AG04450 (cell line): ENCODE measurements at regions of chr4 and their contacts with region 1.

Region 1: GRCh38 chr4:152408514-152409327 is 127.2 kb downstream of the FBXW7 start:
- DNase-seq: no peak
- H3K4me3 ChIP-seq: no peak overlapping the region
- H3K27ac ChIP-seq: no peak overlapping the region
- H3K27me3 ChIP-seq: no peaks in the 10 kb centered on the region
- CTCF ChIP-seq: peak; percentile 68

Region 2: GRCh38 chr4:152385551-152385950 is 23.2 kb before region 1 on chr4:
- CTCF ChIA-PET with region 1: interaction called, 18 read pairs
- POLR2A ChIA-PET with region 1: no interaction called
- DNase-seq: no peak
- H3K4me3 ChIP-seq: no peak overlapping the region
- H3K27ac ChIP-seq: no peak overlapping the region
- H3K27me3 ChIP-seq: no peaks in the 10 kb centered on the region
- CTCF ChIP-seq: peak; percentile 66

Region 3: DNA sequence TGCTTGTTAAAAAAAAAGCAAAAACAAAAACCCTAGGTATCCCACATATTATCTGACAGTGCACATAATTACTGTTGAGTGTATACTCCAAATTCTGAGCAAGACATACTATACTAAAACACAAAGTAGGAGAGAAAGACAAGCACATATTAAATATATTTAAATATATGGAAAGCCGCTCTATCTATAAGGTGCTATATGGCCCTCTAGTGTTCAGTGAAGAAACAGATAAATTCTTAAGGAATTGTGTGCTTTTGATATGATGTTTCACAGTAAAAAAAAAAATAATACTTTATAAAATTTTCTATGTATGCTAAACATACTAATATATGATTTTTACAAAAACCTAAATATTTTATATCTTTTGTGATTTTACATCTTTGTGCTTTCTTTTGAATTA is 10.7 kb before region 1 on chr4:
- CTCF ChIA-PET with region 1: interaction called, 23 read pairs
- POLR2A ChIA-PET with region 1: no interaction called
- DNase-seq: no peak
- H3K4me3 ChIP-seq: no peak overlapping the region
- H3K27ac ChIP-seq: no peak overlapping the region
- H3K27me3 ChIP-seq: no peaks in the 10 kb centered on the region
- CTCF ChIP-seq: peak; percentile 62

Region 4: DNA sequence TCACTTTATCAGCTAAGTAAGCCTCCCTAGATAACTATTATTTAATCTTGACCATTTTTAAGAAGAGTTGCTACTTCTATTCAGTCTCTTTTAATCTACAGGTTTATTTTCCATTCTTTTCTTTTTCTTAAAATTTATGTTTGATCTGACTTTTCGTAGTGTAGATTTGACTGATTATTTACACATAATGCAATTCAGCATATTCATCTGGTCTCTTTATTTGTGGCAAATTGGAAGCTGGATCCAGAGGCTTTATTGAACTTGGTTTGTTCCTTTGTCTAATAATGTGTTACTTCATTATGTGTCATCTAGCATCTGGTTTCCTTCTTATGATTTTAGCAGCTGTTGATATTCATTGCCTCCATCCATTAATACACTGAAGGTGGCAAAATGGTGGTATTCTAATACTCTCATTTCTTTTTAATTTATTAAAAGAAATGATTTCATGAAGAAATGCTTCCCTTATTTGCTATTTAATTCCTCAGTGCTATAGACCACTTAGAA is 14.1 kb after region 1 on chr4:
- CTCF ChIA-PET with region 1: interaction called, 35 read pairs
- POLR2A ChIA-PET with region 1: no interaction called
- DNase-seq: no peak
- H3K4me3 ChIP-seq: no peak overlapping the region
- H3K27ac ChIP-seq: no peak overlapping the region
- H3K27me3 ChIP-seq: no peaks in the 10 kb centered on the region
- CTCF ChIP-seq: no peak

Region 5: DNA sequence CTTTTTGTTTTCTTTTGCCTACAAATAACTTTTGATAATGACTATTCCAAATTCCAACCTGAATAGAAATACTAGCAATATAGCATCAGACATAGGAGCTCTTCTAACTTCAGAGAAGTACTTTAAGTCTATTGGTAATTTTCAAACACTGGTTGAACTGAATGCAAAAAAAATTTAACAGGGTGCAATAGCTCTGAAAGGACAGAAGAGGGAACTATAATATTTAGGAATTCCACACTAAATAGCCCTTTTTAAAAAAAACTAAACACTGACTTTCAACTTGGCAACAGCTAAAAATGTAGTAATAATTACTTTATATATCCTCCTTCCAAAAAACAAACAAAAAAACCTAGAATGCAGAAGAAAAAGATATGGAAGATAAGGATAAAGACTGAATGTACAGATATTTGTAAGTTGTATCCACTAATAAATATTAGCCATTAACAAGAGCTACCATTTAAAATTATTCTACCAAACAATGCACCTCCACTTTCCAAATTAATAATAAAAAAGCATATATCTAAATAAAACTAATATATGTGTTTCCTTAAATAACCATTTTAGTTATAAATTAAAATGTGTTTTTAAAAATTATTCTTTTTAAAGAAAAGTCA is 45.8 kb after region 1 on chr4:
- CTCF ChIA-PET with region 1: interaction called, 14 read pairs
- POLR2A ChIA-PET with region 1: no interaction called
- DNase-seq: no peak
- H3K4me3 ChIP-seq: no peak overlapping the region
- H3K27ac ChIP-seq: no peak overlapping the region
- H3K27me3 ChIP-seq: no peaks in the 10 kb centered on the region
- CTCF ChIP-seq: peak; percentile 72

Region 6: DNA sequence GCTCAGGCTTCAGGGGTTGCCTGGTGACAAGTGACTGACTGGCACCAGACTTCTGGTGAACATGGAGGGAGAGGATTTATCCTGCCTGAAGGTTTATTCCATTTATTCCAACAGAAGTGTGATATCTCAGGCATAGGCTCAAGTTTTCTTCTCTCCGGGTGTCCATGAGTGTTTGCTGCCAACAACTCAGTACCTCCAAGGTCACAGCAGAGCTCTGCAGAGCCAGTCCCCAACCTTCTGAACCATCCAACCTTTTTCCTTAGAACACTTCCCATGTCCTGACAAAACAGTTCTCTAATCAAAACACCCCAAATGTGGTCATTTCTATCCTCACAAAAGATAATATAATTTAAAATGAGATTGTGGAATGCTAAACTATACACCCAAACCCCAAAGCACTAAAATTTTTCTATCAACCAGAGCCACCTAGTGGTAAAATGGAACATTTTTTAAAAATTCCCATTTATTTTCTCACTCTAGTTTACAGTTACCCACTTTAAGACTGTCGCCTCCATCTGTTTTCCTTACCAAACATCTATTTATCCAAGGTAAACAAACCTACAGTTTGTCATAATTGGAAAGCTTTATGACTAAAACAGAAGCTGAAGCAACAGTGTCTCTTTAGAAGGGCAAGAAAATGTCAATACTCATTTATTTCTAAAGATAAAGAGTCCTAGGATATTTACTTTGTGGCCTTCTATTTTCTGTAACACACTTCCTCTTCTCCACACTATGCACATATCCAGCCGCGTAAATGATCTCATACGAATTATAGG is 231.5 kb after region 1 on chr4:
- CTCF ChIA-PET with region 1: interaction called, 63 read pairs
- POLR2A ChIA-PET with region 1: no interaction called
- DNase-seq: no peak
- H3K4me3 ChIP-seq: no peak overlapping the region
- H3K27ac ChIP-seq: no peak overlapping the region
- H3K27me3 ChIP-seq: peaks cover 3% of the 10 kb centered on the region
- CTCF ChIP-seq: peak; percentile 59

Region 7: GRCh38 chr4:152735396-152735859 is 326.7 kb after region 1 on chr4:
- CTCF ChIA-PET with region 1: interaction called, 17 read pairs
- POLR2A ChIA-PET with region 1: no interaction called
- DNase-seq: no peak
- H3K4me3 ChIP-seq: no peak overlapping the region
- H3K27ac ChIP-seq: no peak overlapping the region
- H3K27me3 ChIP-seq: peaks cover 10% of the 10 kb centered on the region
- CTCF ChIP-seq: peak; percentile 61

Region 8: GRCh38 chr4:153166716-153167501 is 758.2 kb after region 1 on chr4:
- CTCF ChIA-PET with region 1: no interaction called
- POLR2A ChIA-PET with region 1: no interaction called
- DNase-seq: no peak
- H3K4me3 ChIP-seq: no peak overlapping the region
- H3K27ac ChIP-seq: no peak overlapping the region
- H3K27me3 ChIP-seq: peaks cover 6% of the 10 kb centered on the region
- CTCF ChIP-seq: no peak

Region 9: DNA sequence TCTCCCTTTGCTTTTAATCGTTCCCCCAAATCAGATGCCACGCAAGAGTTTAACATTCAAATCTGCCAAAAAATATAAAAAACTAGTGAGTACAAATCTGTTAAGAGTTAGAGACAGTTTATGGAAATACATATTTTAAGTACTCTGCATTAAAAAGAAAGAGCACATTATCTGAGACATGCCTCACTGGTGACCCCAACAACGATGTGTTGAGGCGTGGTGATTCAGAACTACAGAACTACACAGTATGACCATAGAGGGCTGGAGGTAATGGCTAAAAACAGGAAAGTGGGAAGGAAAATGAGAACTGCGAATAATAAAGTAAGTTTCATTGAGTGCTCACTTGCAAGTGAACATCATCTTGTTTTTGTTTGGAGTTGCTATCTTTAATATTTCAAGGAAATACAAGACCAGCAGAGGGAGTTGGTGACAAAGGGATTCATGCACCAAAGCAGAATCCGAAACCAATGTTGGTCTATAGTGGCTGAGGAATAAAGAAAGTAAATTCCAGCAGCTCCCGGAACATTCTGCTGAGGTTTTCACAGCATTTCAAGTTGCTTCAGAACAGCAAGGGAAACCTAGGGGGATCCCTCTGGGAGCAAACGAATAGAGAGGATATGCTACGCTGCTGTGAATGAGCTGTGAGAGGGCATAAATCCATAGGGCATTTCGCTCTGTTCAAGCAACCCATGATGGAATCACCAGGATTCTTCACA is 1990.7 kb after region 1 on chr4:
- CTCF ChIA-PET with region 1: no interaction called
- POLR2A ChIA-PET with region 1: no interaction called
- DNase-seq: no peak
- H3K4me3 ChIP-seq: no peak overlapping the region
- H3K27ac ChIP-seq: no peak overlapping the region
- H3K27me3 ChIP-seq: no peaks in the 10 kb centered on the region
- CTCF ChIP-seq: peak; percentile 24; the same call in 1 of the 2 replicates